ENCODE measurements at regions of chr4 and their contacts with region 1.

Region 1: DNA sequence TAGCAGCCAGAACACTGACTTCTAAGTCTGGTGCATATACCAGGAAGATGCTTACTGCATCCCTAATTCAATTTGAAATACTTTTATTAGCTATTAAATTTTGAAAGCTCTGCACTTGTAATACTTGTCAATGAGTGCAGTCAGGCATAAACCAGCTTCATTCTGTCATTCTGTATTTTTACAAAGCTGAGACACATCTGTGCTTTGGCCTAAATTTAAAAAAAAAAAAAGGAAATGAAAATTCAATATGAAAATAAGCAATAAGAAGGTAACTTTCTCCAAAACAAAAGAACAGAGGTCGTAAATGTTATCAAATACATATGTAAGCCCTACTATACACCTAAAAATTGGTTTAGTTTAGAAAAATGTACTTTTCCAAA is 7.0 kb downstream of the SMIM14 start:
- DNase-seq: no peak
- ATAC-seq: no peak
- H3K4me3 ChIP-seq: no peak overlapping the region
- H3K27ac ChIP-seq: no peak overlapping the region
- H3K4me1 ChIP-seq: peaks cover 15% of the 10 kb centered on the region
- H3K27me3 ChIP-seq: no peaks in the 10 kb centered on the region
- CTCF ChIP-seq: no peak

Region 2: GRCh38 chr4:39025552-39026085 is 606.1 kb before region 1 on chr4:
- CTCF ChIA-PET with region 1: no interaction called
- POLR2A ChIA-PET with region 1: no interaction called
- in situ Hi-C with region 1: no loop called
- intact Hi-C with region 1: no loop called
- DNase-seq: no peak
- ATAC-seq: no peak
- H3K4me3 ChIP-seq: no peak overlapping the region
- H3K27ac ChIP-seq: peak overlapping the region; percentile 94
- H3K4me1 ChIP-seq: peaks cover 9% of the 10 kb centered on the region
- H3K27me3 ChIP-seq: no peaks in the 10 kb centered on the region
- CTCF ChIP-seq: no peak

Region 3: GRCh38 chr4:39514888-39515401 is 116.7 kb before region 1 on chr4:
- CTCF ChIA-PET with region 1: no interaction called
- POLR2A ChIA-PET with region 1: no interaction called
- in situ Hi-C with region 1: no loop called
- intact Hi-C with region 1: no loop called
- DNase-seq: peak; percentile 59
- ATAC-seq: peak; percentile 62; the same call in 1 of the 2 replicates
- H3K4me3 ChIP-seq: no peak overlapping the region
- H3K27ac ChIP-seq: 0 out of 2 replicates have a peak overlapping the region, but pooled peaks have one; percentile 51
- H3K4me1 ChIP-seq: peaks cover 3% of the 10 kb centered on the region; the same call in 1 of the 2 replicates
- H3K27me3 ChIP-seq: no peaks in the 10 kb centered on the region
- CTCF ChIP-seq: no peak

Region 4: DNA sequence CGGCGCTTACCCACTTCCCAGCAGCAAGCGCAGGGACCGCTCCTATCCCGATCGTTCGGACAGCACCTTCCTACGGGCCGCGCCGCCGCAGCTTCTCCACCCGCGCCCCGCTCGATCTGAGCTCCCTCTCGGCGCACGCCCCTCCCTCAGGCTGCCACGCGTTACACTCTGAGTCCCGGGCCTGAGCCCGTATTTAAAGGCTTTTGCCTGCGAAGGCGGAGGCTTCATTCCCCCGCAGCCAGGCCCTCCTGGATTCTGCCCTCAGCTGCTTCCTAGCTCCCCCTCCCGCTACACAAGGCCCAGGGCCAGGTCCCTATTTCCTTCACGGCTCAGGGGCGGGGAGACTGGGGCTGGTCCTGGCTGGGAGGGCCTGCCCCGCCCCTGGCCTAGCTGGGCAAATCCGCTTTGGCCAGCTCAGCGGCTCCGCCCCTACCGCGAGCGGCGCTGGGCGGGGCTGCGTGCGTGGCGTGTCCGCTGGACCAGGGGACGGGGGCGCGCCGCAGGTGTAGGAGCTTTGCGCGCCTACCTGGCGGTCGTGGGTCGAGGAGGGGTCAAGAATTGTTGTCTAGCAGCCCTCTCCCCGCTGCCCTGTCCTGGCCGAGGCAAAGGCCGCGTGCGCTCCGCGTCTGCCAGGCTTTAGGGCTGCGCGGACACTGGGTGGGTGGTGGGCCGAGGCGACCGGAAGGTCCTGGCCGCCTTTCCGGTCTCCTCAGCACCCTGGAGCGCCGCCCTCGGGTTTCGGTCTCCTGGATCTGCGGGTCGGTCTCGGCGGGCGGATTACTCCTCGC is 104.2 kb before region 1 on chr4 and contains the start of gene UGDH:
- CTCF ChIA-PET with region 1: no interaction called
- POLR2A ChIA-PET with region 1: interaction called, 21 read pairs
- in situ Hi-C with region 1: no loop called
- intact Hi-C with region 1: no loop called
- DNase-seq: peak; percentile 74
- ATAC-seq: peak; percentile 95
- H3K4me3 ChIP-seq: peak within 1 kb of the TSS; percentile 92 to 96
- H3K27ac ChIP-seq: peak within 1 kb of the TSS; percentile 98
- H3K4me1 ChIP-seq: peaks cover 10% of the 10 kb centered on the region
- H3K27me3 ChIP-seq: no peaks in the 10 kb centered on the region
- CTCF ChIP-seq: no peak
- total RNA-seq, gene UGDH: 373 TPM

Region 5: GRCh38 chr4:39682138-39682537 is 50.4 kb after region 1 on chr4:
- CTCF ChIA-PET with region 1: no interaction called
- POLR2A ChIA-PET with region 1: interaction called, 14 read pairs
- in situ Hi-C with region 1: no loop called
- intact Hi-C with region 1: no loop called
- DNase-seq: no peak
- ATAC-seq: no peak
- H3K4me3 ChIP-seq: no peak overlapping the region
- H3K27ac ChIP-seq: no peak overlapping the region
- H3K4me1 ChIP-seq: no peaks in the 10 kb centered on the region
- H3K27me3 ChIP-seq: no peaks in the 10 kb centered on the region
- CTCF ChIP-seq: no peak

Region 6: GRCh38 chr4:40710502-40711254 is 1079.0 kb after region 1 on chr4:
- CTCF ChIA-PET with region 1: no interaction called
- POLR2A ChIA-PET with region 1: no interaction called
- in situ Hi-C with region 1: no loop called
- intact Hi-C with region 1: no loop called
- DNase-seq: no peak
- ATAC-seq: no peak
- H3K4me3 ChIP-seq: no peak overlapping the region
- H3K27ac ChIP-seq: no peak overlapping the region
- H3K4me1 ChIP-seq: no peaks in the 10 kb centered on the region
- H3K27me3 ChIP-seq: no peaks in the 10 kb centered on the region
- CTCF ChIP-seq: no peak

Measured in Panc1 (cell line).